ENCODE measurements at regions of chr16 and their contacts with region 1.

Region 1: DNA sequence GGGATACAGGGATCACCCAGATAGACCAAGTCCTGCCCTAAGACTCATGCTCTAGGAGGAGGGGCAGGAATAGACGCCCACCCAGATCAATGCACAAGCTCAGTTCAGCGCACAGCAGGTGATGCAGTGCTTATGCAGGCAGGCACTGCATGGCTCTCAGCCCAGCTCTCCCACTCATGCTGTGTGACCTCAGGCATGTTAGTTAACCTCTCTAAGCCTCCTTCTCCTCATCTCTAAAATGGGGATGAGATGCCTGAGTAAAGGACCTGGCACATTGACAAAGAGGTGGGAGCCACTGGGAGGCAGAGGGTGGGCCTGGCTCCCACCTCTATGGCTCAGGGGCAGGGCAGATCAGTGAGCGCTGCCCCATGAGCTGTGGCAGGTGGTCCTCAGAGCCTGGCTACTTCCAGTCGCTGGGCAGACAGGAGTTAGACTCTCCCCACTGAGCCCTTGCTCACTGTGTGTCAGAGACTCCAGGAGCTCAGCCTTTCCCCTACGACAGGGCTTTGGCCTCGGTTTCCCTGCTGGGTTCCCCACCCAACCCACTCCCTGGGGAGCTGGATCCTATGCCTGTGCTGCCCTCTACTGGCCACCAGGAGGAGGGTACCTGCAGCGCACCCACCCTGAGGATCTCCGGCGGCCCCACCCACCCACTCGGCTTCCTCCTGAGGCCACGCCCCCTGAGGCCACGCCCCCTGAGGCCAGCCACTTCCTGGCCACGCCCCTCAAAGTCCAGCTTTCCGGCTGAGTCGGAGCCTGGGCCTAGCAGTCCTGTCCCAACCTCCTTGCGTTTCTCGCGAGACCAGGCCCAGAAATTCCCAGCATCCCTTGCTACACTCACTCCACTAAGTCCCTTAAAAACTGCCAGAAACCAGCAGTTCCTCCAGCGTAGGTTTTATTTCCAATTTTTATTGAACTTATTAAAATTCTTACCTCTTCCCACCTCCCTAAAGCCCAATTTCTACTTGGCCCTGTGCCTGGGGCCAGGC is 196.1 kb downstream of the GSG1L start:
- DNase-seq: peak; percentile 85
- H3K4me3 ChIP-seq: no peak overlapping the region
- H3K27ac ChIP-seq: no peak overlapping the region
- H3K4me1 ChIP-seq: no peaks in the 10 kb centered on the region
- H3K27me3 ChIP-seq: no peaks in the 10 kb centered on the region

Region 2: GRCh38 chr16:27367461-27368357 is 499.7 kb before region 1 on chr16:
- in situ Hi-C with region 1: no loop called
- DNase-seq: peak; percentile 84
- H3K4me3 ChIP-seq: peak overlapping the region; percentile 40
- H3K27ac ChIP-seq: peak overlapping the region; percentile 81
- H3K4me1 ChIP-seq: peaks cover 29% of the 10 kb centered on the region
- H3K27me3 ChIP-seq: no peaks in the 10 kb centered on the region

Region 3: DNA sequence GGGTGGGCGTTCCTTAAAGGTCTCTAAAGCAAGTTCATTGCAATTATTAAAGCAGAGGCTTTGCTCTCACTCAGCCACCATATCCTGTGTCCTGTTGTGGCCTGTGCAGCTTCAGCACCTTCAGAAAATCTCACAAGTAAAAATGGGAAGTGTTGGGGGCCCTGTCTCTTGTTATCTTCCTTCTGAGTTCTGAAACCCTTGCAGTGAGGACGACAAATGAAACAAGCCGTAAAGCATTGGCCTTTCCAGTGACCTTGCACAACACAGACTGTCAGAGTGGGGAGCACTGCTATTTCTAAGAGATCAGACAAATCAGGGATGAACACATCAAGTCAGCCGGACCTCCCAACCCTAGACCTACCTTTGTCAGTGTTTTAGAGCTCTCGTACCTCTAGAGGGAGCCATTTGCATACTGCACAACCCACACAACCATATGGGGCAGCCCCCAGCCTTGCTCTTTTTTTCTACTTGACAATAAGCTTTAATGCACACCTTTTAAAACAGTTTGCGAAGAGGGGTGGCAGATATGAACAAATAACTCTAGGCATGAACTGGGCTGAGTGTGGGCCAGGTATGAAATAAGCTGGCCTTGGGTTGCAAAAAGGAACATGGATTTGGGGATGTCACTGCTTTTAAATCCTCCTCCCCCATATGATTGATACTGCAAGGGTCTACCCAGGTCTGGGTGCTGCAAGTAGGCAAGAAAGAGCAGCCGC is 227.7 kb before region 1 on chr16:
- in situ Hi-C with region 1: loop called (anchors 10 kb)
- DNase-seq: peak; percentile 65
- H3K4me3 ChIP-seq: no peak overlapping the region
- H3K27ac ChIP-seq: no peak overlapping the region
- H3K4me1 ChIP-seq: no peaks in the 10 kb centered on the region
- H3K27me3 ChIP-seq: no peaks in the 10 kb centered on the region

Measured in GM23248 (cell line).